HEK293T (cell line): ENCODE measurements at regions of chr2 and their contacts with region 1.

Region 1: GRCh38 chr2:102020596-102021181 is 28.9 kb downstream of the IL1R2 start:
- DNase-seq: peak; percentile 84

Region 2: DNA sequence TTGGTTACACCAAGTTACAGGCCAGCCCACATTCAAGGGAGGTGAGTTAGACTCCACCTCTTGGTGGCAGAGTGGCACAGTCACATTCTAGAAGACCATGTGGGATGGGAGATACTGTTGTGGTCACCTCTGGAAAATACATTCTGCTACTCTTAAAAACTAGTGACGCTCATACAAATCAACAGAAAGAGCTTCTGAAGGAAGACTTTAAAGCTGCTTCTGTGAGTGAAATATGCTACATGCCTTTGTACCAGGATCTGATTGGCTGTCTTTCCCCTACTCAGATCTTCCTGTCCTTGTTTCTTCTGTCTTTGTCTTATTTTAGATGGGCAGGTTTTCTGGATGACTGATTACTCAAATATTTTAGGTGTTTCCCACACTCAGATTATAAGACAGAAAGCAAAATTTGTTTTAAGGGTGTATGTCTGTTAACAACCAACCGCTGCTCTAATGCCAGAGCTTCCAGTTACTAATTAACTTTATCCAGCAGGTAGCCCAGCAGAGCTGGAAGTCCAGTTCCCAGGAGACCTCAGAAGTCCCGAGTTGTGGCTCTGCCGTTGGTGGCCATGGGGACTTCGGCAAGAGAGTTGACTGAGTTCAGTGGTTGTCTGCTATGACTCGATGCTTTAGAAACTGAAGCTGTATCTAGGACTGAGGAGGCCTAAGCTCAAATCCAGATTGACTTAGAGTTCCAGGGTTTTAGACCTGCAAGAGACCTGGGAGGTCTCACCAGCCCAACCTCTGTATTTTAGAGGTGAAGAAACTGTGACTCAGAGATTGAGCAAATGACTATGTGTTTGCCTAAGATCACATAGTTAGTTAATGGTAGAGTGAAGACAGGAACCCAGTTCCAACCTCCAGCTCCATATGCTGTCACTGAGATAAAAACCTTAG is 21.5 kb before region 1 on chr2:
- CTCF ChIA-PET with region 1: interaction called, 10 read pairs
- POLR2A ChIA-PET with region 1: no interaction called
- DNase-seq: no peak

Region 3: DNA sequence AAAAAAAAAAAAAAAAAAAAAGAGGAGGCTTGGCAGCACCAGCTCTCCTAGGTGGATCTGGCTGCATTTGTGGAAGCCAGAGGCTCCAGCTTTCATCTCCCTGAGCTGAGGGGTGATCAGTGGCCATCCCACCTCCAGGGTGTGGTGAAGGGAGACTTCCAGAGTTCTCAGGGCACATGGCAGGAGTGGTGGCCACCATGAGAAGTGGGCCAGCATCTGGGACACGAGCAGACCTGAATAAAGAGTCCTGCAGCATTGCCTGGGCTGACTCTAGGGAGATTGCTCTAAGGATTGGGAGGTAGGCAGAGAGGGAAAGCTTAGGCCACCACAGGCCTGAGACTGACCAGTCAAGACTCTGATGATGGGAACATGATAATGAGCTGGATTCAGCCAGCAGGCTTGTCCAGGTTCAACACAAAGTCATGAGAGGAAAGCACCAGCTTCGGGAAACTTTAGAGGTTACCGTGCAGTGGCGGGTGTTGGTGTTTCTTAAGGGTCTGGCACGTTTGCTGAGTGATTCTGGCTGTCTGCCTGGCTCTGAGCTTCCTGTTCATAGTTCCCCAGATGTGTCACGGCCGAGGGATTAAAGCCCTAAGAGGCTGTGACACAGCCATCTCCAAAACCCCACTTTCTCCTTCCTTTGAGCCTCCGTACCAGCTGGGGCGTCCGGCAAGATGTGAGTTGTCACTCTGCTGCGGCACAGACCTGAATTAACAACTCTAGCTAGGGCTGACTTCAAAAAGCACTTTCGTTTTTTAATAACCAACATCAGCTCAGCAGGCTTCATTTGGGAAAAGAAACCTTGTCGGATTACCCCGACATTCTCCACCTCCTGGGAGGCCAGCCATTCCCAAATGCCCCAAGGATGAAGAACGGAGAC is 83.5 kb after region 1 on chr2:
- CTCF ChIA-PET with region 1: no interaction called
- POLR2A ChIA-PET with region 1: no interaction called
- DNase-seq: no peak

Region 4: DNA sequence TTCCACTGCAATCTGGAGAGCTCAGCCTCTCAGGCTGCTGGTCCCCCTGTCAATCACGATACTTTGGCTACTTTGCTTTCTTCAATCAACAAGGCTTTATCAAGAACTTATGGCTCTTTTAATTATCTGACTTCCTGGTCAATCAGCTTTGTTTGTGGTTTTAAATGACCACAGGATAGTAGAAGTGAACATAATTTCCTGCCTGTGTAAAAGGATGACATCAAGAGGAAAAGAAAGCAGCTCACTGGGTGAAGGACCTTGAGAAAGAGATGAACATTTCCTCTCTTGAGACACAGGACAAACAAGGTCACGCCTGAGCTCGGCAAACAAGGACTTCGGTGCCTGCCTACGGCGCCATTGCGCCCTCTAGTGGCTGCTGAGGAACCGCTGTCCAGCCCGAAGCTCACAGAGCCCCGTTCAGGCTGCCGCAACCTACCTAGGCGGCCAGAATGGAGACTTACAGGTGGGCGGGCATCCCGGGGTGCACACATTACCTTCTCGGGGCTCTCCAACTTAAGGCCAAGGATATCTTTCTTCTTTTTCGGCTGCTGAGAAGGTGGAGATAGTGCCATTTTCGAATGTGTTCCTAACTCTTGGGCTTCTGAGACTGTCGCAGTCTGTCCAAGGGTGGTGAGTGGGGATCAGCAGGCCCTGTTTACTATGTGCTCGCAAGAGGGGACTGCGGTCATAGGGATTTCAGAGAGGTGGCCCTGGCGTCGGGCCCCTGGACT is 220.1 kb after region 1 on chr2:
- CTCF ChIA-PET with region 1: interaction called, 31 read pairs
- POLR2A ChIA-PET with region 1: interaction called, 4 read pairs
- DNase-seq: peak; percentile 83